Panc1 (cell line): ENCODE measurements at regions of chr10 and their contacts with region 1.

Region 1: GRCh38 chr10:111993872-111994426 is 189.6 kb downstream of the GPAM start:
- DNase-seq: no peak
- ATAC-seq: no peak
- H3K4me3 ChIP-seq: no peak overlapping the region
- H3K27ac ChIP-seq: no peak overlapping the region
- H3K4me1 ChIP-seq: no peaks in the 10 kb centered on the region
- H3K27me3 ChIP-seq: peaks cover 4% of the 10 kb centered on the region; the same call in 1 of the 2 replicates
- CTCF ChIP-seq: no peak

Region 2: DNA sequence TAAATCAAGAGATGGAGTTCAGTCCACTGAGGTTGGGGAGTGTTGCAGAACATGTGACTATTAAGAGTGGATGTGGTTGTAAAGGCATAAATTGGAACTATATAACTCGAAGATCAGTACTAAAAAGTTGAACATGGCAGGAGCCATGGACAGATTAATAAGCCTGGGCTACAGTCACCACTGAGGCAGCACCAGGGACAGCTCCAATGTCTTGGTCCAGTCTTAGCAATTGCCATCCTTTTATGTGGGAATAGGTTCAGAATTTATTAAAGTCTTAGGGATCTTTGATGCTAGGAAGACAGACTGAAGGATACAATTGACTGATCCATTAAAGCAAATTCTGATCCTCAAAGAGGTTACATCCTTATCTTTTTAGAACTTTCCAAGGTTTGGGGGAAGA is 760.5 kb before region 1 on chr10:
- CTCF ChIA-PET with region 1: no interaction called
- POLR2A ChIA-PET with region 1: no interaction called
- in situ Hi-C with region 1: no loop called
- intact Hi-C with region 1: no loop called
- DNase-seq: no peak
- ATAC-seq: no peak
- H3K4me3 ChIP-seq: no peak overlapping the region
- H3K27ac ChIP-seq: no peak overlapping the region
- H3K4me1 ChIP-seq: no peaks in the 10 kb centered on the region
- H3K27me3 ChIP-seq: no peaks in the 10 kb centered on the region
- CTCF ChIP-seq: no peak

Region 3: GRCh38 chr10:111835574-111835973 is 158.4 kb before region 1 on chr10:
- CTCF ChIA-PET with region 1: no interaction called
- POLR2A ChIA-PET with region 1: interaction called, 10 read pairs
- in situ Hi-C with region 1: no loop called
- intact Hi-C with region 1: no loop called
- DNase-seq: no peak
- ATAC-seq: no peak
- H3K4me3 ChIP-seq: no peak overlapping the region
- H3K27ac ChIP-seq: no peak overlapping the region
- H3K4me1 ChIP-seq: no peaks in the 10 kb centered on the region
- H3K27me3 ChIP-seq: no peaks in the 10 kb centered on the region; the same call in 1 of the 2 replicates
- CTCF ChIP-seq: no peak